ENCODE measurements at regions of chr15 and their contacts with region 1.

Region 1: DNA sequence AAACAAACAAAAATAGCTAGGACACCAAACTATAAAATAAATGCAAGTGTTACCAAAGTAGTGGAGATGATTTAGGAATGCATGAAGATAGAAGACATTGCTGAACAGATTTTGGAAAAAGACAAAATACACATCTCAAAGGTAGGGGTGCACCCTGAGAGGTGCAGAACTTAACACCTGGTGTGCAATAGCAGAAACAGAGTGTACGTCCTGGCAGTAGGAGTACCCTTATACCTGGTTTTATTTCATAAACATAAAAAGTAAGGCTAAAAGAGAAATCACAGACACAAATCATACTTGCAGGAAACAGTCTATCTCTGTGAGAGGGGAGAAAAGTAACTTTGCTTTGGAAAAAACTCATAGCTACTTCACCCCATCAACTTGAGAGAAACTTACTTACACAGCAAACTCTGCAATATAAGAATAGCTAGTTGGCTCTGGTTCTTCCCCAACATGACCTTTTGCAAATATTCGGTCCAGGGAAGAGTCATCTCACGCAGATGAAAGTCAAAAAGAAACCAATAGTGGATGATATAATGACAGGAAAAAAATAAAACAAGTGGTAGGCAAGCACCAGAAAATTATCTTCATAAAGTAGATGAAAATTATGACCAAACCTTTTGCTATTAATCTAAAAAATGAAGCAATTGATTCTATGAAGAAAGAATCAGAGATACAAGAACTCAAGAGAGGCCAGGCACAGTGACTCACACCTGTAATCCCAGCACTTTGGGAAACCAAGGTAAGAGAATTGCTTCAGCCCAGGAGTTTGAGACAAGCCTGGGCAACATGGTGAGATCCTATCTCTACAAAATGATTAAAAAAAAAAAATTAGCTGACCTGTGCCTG is 108.9 kb upstream of the BNIP2 start:
- DNase-seq: no peak
- ATAC-seq: no peak
- H3K4me3 ChIP-seq: no peak overlapping the region
- H3K27ac ChIP-seq: no peak overlapping the region
- H3K4me1 ChIP-seq: no peaks in the 10 kb centered on the region
- H3K27me3 ChIP-seq: 0 out of 2 replicates have a peak, but pooled peaks cover 2% of the 10 kb centered on the region
- CTCF ChIP-seq: no peak
- POLR2A ChIP-seq: no peak
- RAD21 ChIP-seq: no peak

Region 2: DNA sequence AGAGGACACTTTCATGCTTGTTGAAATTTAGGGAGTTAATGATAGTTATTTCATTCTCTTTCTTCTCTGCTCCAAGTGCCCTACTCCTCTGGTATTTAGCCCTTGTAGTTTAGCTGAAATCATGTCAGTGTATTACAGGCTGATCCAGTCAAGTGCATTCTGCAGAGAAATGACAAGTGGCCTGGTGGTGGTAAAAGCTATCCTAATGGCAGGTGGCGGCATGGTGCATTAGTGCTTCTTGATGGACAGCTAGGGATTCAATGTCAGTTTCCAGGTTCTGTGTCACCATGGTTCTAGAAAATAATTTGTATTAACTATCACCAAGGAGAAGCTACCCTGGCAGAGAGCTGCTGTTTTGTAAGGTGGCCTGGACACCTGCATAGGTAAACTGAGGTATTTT is 18.9 kb before region 1 on chr15:
- CTCF ChIA-PET with region 1: no interaction called
- POLR2A ChIA-PET with region 1: no interaction called
- dilution Hi-C with region 1: no loop called
- in situ Hi-C with region 1: no loop called
- intact Hi-C with region 1: loop called (anchors 2 kb)
- DNase-seq: no peak
- ATAC-seq: no peak
- H3K4me3 ChIP-seq: no peak overlapping the region
- H3K27ac ChIP-seq: no peak overlapping the region
- H3K4me1 ChIP-seq: no peaks in the 10 kb centered on the region
- H3K27me3 ChIP-seq: no peaks in the 10 kb centered on the region
- CTCF ChIP-seq: no peak
- POLR2A ChIP-seq: no peak
- RAD21 ChIP-seq: no peak